Left ventricle myocardium superior (tissue), 1 donor: ENCODE measurements at regions of chr6 and their contacts with region 1.

Region 1: GRCh38 chr6:121274666-121275295 is 59.5 kb downstream of the TBC1D32 start:
- DNase-seq: no peak
- ATAC-seq: no peak

Region 2: GRCh38 chr6:121236984-121237383 is 37.8 kb before region 1 on chr6:
- intact Hi-C with region 1: loop called (anchors 2 kb)
- DNase-seq: no peak
- ATAC-seq: no peak